ENCODE measurements at regions of chr18 and their contacts with region 1.

Region 1: GRCh38 chr18:44977856-44978255 is 297.2 kb downstream of the SETBP1 start:
- DNase-seq: no peak
- H3K4me3 ChIP-seq: no peak overlapping the region
- H3K27ac ChIP-seq: no peak overlapping the region
- H3K4me1 ChIP-seq: no peaks in the 10 kb centered on the region
- H3K27me3 ChIP-seq: no peaks in the 10 kb centered on the region
- CTCF ChIP-seq: no peak
- POLR2A ChIP-seq: no peak

Region 2: DNA sequence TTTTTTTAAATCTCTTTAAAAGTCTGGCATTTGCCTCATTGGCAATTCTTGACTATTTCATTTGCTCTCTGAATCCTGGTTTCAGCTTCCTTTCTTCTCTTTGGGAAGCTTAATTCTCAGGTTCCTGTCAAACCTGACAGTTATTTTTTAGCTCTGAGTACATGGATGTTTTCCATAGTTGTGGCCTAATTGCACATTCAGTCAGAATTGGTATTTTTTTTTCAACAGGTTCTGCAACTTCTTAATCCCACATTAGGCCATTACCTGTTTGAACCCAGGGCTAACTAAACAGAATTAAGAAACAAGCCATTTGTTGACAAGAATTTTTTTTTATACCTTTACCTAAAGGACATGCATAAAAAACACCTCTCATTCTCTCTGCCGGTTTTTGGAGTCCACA is 41.6 kb after region 1 on chr18:
- intact Hi-C with region 1: loop called (anchors 2 kb)
- DNase-seq: no peak
- H3K4me3 ChIP-seq: no peak overlapping the region
- H3K27ac ChIP-seq: no peak overlapping the region
- H3K4me1 ChIP-seq: peaks cover 0 to 8% of the 10 kb centered on the region in 2 donors
- H3K27me3 ChIP-seq: no peaks in the 10 kb centered on the region
- CTCF ChIP-seq: no peak
- POLR2A ChIP-seq: no peak